ENCODE measurements at regions of chr13 and their contacts with region 1.

Region 1: DNA sequence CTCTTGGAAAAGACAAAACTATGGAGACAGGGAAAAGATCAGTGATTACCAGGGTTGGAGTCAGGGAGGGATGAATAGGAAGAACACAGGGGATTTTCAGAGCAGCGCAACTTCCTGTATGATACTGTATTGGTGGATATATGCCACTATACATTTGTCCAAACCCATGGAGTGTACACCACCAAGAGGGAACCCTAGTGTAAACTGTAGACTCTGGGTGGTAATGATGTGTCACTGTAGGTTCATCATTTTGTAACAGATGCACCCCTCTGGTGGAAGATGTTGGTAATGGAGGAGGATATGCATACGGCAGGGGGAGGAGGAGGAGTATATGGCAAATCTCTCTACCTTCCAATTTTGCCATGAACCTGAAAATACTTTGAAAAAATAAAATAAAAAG is 68.1 kb downstream of the UFM1 start:
- DNase-seq: no peak
- ATAC-seq: peak; percentile 75
- H3K4me3 ChIP-seq: no peak overlapping the region
- H3K27ac ChIP-seq: no peak overlapping the region
- H3K4me1 ChIP-seq: peaks cover 5% of the 10 kb centered on the region; the same call in 1 of the 2 replicates
- H3K27me3 ChIP-seq: no peaks in the 10 kb centered on the region
- CTCF ChIP-seq: peak; percentile 35 to 43 (median 43); a peak in 4 of 6 replicates
- EP300 ChIP-seq: no peak
- POLR2A ChIP-seq: no peak
- RAD21 ChIP-seq: peak; percentile 67

Region 2: DNA sequence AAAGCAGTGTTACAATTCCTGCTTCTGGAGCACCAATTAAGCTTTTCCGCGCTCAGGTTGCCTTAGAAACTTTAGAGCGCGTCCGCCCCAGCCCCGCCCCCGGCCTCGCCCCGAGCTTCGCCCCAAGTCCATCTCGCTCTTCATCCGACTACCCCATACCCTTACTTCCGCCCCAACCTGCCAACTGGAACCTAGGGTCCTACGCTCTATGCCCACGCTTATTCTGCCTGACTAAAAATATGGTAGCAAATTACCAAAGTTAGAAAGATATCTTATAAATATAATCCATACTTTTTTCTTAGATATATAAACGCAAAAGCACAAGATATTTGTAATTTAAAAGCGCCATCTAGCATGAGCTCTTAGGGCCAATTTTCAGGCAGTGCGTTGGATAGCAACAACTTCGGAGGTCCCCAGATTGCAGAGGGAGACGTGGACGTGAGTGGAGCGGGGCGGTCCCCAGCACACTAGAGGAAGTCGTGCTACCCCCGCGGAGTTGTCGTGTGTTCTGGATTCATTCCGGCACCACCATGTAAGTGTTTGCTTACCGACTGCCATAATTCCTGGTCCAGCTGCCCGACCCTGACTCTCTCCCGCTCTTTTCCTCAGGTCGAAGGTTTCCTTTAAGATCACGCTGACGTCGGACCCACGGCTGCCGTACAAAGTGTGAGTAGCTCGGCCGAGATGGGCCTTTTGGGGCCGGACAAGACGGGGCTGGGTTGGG is 68.2 kb before region 1 on chr13 and contains the start of gene UFM1:
- CTCF ChIA-PET with region 1: no interaction called
- POLR2A ChIA-PET with region 1: no interaction called
- RAD21 ChIA-PET with region 1: interaction called, 3 read pairs
- SMC1A ChIA-PET with region 1: interaction called, 3 read pairs
- in situ Hi-C with region 1: no loop called
- intact Hi-C with region 1: loop called (anchors 5 kb)
- DNase-seq: peak; percentile 86
- ATAC-seq: peak; percentile 96
- H3K4me3 ChIP-seq: peak within 1 kb of the TSS; percentile 89
- H3K27ac ChIP-seq: peak within 1 kb of the TSS; percentile 95
- H3K4me1 ChIP-seq: peaks cover 7% of the 10 kb centered on the region; the same call in 1 of the 2 replicates
- H3K27me3 ChIP-seq: no peaks in the 10 kb centered on the region
- CTCF ChIP-seq: no peak
- EP300 ChIP-seq: no peak
- POLR2A ChIP-seq: peak; percentile 97
- RAD21 ChIP-seq: no peak
- polyA plus RNA-seq, gene UFM1: 91.9 to 96.5 TPM

Region 3: GRCh38 chr13:38842523-38842922 is 424.8 kb after region 1 on chr13:
- CTCF ChIA-PET with region 1: no interaction called
- POLR2A ChIA-PET with region 1: no interaction called
- RAD21 ChIA-PET with region 1: no interaction called
- SMC1A ChIA-PET with region 1: no interaction called
- in situ Hi-C with region 1: no loop called
- intact Hi-C with region 1: no loop called
- DNase-seq: no peak
- ATAC-seq: no peak
- H3K4me3 ChIP-seq: no peak overlapping the region
- H3K27ac ChIP-seq: no peak overlapping the region
- H3K4me1 ChIP-seq: no peaks in the 10 kb centered on the region
- H3K27me3 ChIP-seq: no peaks in the 10 kb centered on the region
- CTCF ChIP-seq: no peak
- EP300 ChIP-seq: no peak
- POLR2A ChIP-seq: no peak
- RAD21 ChIP-seq: no peak